Activated CD4-positive, alpha-beta T cell treated with anti-CD3 and anti-CD28 coated beads, Interleukin-2, amount 10 ng/mL, durations not matched to agents 7 days and 5 days (primary cell): ENCODE measurements at regions of chr6 and their contacts with region 1.

Region 1: GRCh38 chr6:26031595-26032339 is 55.5 kb upstream of the HFE start:
- DNase-seq: peak; percentile 96
- H3K4me3 Mint-ChIP-seq: peak overlapping the region; percentile 96
- H3K27ac Mint-ChIP-seq: peak overlapping the region; percentile 100
- H3K4me1 Mint-ChIP-seq: peaks cover 79% of the 10 kb centered on the region
- H3K27me3 Mint-ChIP-seq: peaks cover 3% of the 10 kb centered on the region

Region 2: GRCh38 chr6:26017632-26017966 is 14.2 kb before region 1 on chr6:
- CTCF ChIA-PET with region 1: interaction called, 23 read pairs
- POLR2A ChIA-PET with region 1: interaction called, 83 read pairs
- DNase-seq: peak; percentile 77
- H3K4me3 Mint-ChIP-seq: peak overlapping the region; percentile 68
- H3K27ac Mint-ChIP-seq: peak overlapping the region; percentile 94
- H3K4me1 Mint-ChIP-seq: peaks cover 35% of the 10 kb centered on the region
- H3K27me3 Mint-ChIP-seq: no peaks in the 10 kb centered on the region

Region 3: GRCh38 chr6:26045065-26045927 is 13.5 kb after region 1 on chr6:
- CTCF ChIA-PET with region 1: interaction called, 121 read pairs
- POLR2A ChIA-PET with region 1: interaction called, 504 read pairs
- DNase-seq: peak; percentile 93
- H3K4me3 Mint-ChIP-seq: peak overlapping the region; percentile 83
- H3K27ac Mint-ChIP-seq: peak overlapping the region; percentile 99
- H3K4me1 Mint-ChIP-seq: peaks cover 44% of the 10 kb centered on the region
- H3K27me3 Mint-ChIP-seq: no peaks in the 10 kb centered on the region

Region 4: GRCh38 chr6:26054857-26055669 is 23.3 kb after region 1 on chr6:
- CTCF ChIA-PET with region 1: interaction called, 4 read pairs
- POLR2A ChIA-PET with region 1: interaction called, 504 read pairs
- DNase-seq: peak; percentile 94
- H3K4me3 Mint-ChIP-seq: peak overlapping the region; percentile 87
- H3K27ac Mint-ChIP-seq: peak overlapping the region; percentile 99
- H3K4me1 Mint-ChIP-seq: peaks cover 40% of the 10 kb centered on the region
- H3K27me3 Mint-ChIP-seq: no peaks in the 10 kb centered on the region

Region 5: GRCh38 chr6:26249957-26250697 is 218.4 kb after region 1 on chr6:
- CTCF ChIA-PET with region 1: interaction called, 5 read pairs
- POLR2A ChIA-PET with region 1: interaction called, 28 read pairs
- DNase-seq: peak; percentile 82
- H3K4me3 Mint-ChIP-seq: peak overlapping the region; percentile 98
- H3K27ac Mint-ChIP-seq: peak overlapping the region; percentile 100
- H3K4me1 Mint-ChIP-seq: peaks cover 40% of the 10 kb centered on the region
- H3K27me3 Mint-ChIP-seq: no peaks in the 10 kb centered on the region

Region 6: DNA sequence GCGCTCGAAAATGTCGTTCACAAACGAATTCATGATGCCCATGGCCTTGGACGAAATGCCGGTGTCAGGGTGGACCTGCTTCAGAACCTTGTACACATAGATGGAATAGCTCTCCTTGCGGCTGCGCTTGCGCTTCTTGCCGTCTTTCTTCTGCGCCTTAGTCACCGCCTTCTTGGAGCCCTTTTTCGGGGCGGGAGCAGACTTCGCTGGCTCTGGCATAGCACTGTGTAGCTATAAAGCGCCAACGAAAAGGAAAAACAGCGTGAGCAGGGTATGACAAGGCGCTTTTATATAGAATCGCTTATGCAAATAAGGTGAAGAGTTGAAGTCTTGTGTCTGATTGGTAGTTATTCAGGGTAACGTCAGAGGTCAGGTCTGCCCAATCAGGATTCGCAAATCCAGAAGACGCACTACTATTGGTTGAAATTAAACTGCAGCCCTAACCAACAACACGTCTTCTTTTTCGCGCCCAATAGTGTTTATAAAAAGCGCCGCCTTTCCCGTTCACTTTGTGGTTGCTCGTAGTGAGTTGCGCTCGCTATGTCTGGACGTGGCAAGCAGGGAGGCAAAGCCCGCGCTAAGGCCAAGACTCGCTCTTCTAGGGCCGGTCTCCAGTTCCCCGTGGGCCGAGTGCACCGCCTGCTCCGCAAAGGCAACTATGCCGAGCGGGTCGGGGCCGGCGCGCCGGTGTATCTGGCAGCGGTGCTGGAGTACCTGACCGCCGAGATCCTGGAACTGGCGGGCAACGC is 1100.9 kb after region 1 on chr6:
- CTCF ChIA-PET with region 1: no interaction called
- POLR2A ChIA-PET with region 1: interaction called, 20 read pairs
- DNase-seq: peak; percentile 94
- H3K4me3 Mint-ChIP-seq: no peak overlapping the region
- H3K27ac Mint-ChIP-seq: no peak overlapping the region
- H3K4me1 Mint-ChIP-seq: peaks cover 66% of the 10 kb centered on the region
- H3K27me3 Mint-ChIP-seq: no peaks in the 10 kb centered on the region

Region 7: DNA sequence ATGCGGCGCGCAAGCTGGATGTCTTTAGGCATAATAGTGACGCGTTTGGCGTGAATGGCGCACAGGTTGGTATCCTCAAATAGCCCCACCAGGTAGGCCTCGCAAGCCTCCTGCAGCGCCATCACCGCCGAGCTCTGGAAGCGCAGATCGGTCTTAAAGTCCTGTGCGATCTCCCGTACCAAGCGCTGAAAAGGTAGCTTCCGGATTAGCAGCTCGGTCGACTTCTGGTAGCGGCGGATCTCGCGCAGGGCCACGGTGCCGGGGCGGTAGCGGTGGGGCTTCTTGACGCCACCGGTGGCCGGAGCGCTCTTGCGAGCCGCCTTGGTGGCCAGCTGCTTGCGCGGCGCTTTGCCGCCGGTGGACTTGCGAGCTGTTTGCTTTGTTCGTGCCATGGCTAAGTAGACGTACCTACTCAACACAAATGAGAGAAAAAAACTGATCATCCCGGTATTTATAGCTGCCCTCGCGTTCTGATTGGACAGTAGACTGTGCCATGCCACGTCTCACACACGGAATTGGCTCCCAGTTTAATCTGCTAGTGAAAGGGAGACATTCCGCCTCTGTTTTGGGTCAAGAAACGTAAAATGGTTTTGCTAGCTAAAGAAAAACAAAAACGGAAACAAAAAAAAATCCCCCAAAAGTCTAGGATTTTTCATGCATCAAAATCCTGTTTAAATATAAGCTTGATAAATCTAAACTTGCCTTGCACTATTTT is 1840.3 kb after region 1 on chr6:
- CTCF ChIA-PET with region 1: no interaction called
- POLR2A ChIA-PET with region 1: interaction called, 18 read pairs
- DNase-seq: peak; percentile 94
- H3K4me3 Mint-ChIP-seq: peak overlapping the region; percentile 92
- H3K27ac Mint-ChIP-seq: peak overlapping the region; percentile 99
- H3K4me1 Mint-ChIP-seq: peaks cover 65% of the 10 kb centered on the region
- H3K27me3 Mint-ChIP-seq: no peaks in the 10 kb centered on the region